Endothelial cell of umbilical vein (primary cell): ENCODE measurements at regions of chr7 and their contacts with region 1.

Region 1: DNA sequence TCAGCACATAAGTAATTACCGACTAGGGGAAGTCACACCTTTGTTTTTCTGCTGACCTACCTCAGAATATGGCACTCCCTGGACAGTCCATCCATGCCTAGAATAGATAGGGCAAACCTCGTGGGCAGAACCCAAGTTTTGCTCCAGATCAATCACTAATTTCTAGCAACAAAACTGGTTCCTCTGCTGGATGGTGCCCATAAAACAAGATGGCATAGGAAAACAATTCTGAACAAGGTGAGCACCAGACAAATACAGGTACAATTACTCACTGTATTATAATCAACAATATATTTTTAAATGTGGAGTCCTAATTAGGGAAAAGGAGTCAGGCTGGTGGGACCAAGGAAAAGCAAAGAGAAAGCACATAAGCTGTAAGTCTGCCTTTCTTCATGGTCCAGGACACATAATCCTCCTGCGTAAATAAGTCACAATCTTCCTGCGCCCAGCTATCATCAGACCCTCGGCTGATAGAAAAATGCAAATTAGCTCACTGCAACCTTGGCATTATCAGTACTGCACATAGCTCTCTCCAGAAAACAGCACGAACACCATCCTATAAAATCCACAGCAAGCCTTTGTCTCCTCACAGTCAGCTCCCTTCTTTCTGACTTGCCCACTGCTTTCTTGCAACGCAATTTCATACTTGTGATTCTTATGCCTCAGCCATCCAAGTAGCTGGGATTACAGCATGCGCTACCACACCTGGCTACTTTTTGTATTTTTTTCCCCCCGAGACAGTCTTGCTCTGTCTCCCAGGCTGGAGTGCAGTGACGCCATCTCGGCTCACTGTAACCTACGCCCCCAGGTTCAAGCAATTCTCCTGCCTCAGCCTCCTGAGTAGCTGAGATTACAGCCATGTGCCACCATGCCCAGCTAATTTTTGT is 15.1 kb downstream of the URGCP start:
- DNase-seq: no peak
- H3K4me3 ChIP-seq: no peak overlapping the region
- H3K27ac ChIP-seq: no peak overlapping the region
- H3K4me1 ChIP-seq: peaks cover 6% of the 10 kb centered on the region
- H3K27me3 ChIP-seq: no peaks in the 10 kb centered on the region
- CTCF ChIP-seq: no peak
- POLR2A ChIP-seq: no peak

Region 2: GRCh38 chr7:43824963-43825362 is 66.3 kb before region 1 on chr7:
- CTCF ChIA-PET with region 1: no interaction called
- POLR2A ChIA-PET with region 1: no interaction called
- dilution Hi-C with region 1: no loop called
- intact Hi-C with region 1: no loop called
- DNase-seq: no peak
- H3K4me3 ChIP-seq: no peak overlapping the region
- H3K27ac ChIP-seq: no peak overlapping the region
- H3K4me1 ChIP-seq: no peaks in the 10 kb centered on the region
- H3K27me3 ChIP-seq: peaks cover 22 to 31% of the 10 kb centered on the region in 2 experiments
- CTCF ChIP-seq: no peak
- POLR2A ChIP-seq: no peak

Region 3: GRCh38 chr7:43851805-43852204 is 39.5 kb before region 1 on chr7:
- CTCF ChIA-PET with region 1: no interaction called
- POLR2A ChIA-PET with region 1: no interaction called
- dilution Hi-C with region 1: no loop called
- intact Hi-C with region 1: loop called (anchors 1 kb)
- DNase-seq: no peak
- H3K4me3 ChIP-seq: no peak overlapping the region
- H3K27ac ChIP-seq: no peak overlapping the region
- H3K4me1 ChIP-seq: no peaks in the 10 kb centered on the region
- H3K27me3 ChIP-seq: peaks cover 6% of the 10 kb centered on the region in 2 experiments
- CTCF ChIP-seq: no peak
- POLR2A ChIP-seq: no peak

Region 4: DNA sequence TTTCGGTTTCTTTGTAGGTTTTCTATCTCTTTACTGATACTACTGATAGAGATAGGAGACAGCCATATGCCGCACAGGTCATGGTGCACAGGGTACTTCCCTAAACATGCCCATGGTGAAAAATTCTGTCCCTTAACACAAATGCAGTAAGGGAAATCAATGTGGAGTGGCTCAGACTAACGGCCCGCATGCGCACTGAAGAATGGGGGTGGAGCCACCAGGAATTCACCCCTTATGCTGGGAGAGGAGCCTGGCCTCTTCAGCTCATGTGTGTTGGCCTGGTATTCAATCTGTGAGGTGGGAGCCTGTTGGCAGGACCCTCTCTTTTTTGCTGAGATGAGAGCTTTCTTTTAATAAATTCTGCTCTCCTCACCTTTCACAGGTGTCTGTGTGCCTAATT is 23.5 kb after region 1 on chr7:
- CTCF ChIA-PET with region 1: no interaction called
- POLR2A ChIA-PET with region 1: no interaction called
- dilution Hi-C with region 1: no loop called
- intact Hi-C with region 1: no loop called
- DNase-seq: no peak
- H3K4me3 ChIP-seq: no peak overlapping the region
- H3K27ac ChIP-seq: no peak overlapping the region
- H3K4me1 ChIP-seq: no peaks in the 10 kb centered on the region
- H3K27me3 ChIP-seq: no peaks in the 10 kb centered on the region
- CTCF ChIP-seq: no peak
- POLR2A ChIP-seq: no peak